Activated CD8-positive, alpha-beta T cell treated with anti-CD3 and anti-CD28 coated beads, Interleukin-2, amount 10 ng/mL, durations not matched to agents 7 days and 5 days (primary cell): ENCODE measurements at regions of chr11 and their contacts with region 1.

Region 1: GRCh38 chr11:3971756-3972404 is 116.4 kb downstream of the STIM1 start:
- DNase-seq: no peak
- ATAC-seq: no peak
- H3K4me3 Mint-ChIP-seq: no peak overlapping the region
- H3K27ac Mint-ChIP-seq: no peak overlapping the region
- H3K4me1 Mint-ChIP-seq: peaks cover 53% of the 10 kb centered on the region
- H3K27me3 Mint-ChIP-seq: no peaks in the 10 kb centered on the region

Region 2: DNA sequence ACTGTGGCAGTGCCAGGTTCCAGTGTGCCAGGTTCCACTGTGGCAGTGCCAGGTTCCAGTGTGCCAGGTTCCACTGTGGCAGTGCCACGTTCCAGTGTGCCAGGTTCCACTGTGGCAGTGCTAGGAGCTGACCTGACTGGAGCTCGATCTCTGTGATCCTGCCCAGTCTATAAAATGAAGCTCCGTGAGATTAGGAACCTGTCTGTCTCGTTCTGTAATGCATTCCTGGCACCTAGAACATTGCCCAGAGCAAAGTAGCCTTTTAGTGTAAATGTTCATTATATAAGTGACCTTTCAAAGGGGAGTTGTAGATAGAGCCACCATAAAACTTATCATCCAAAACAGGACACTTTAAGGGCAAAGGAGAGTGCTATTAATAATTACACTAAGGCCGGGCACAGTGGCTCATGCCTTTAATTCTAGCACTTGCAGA is 366.1 kb before region 1 on chr11:
- CTCF ChIA-PET with region 1: no interaction called
- POLR2A ChIA-PET with region 1: no interaction called
- DNase-seq: no peak
- ATAC-seq: no peak
- H3K4me3 Mint-ChIP-seq: no peak overlapping the region
- H3K27ac Mint-ChIP-seq: no peak overlapping the region
- H3K4me1 Mint-ChIP-seq: no peaks in the 10 kb centered on the region
- H3K27me3 Mint-ChIP-seq: peaks cover 2% of the 10 kb centered on the region

Region 3: GRCh38 chr11:3984896-3985295 is 13.0 kb after region 1 on chr11:
- CTCF ChIA-PET with region 1: interaction called, 31 read pairs
- POLR2A ChIA-PET with region 1: no interaction called
- DNase-seq: peak; percentile 64
- ATAC-seq: peak; percentile 70
- H3K4me3 Mint-ChIP-seq: no peak overlapping the region
- H3K27ac Mint-ChIP-seq: peak overlapping the region; percentile 9
- H3K4me1 Mint-ChIP-seq: peaks cover 82% of the 10 kb centered on the region
- H3K27me3 Mint-ChIP-seq: no peaks in the 10 kb centered on the region

Region 4: DNA sequence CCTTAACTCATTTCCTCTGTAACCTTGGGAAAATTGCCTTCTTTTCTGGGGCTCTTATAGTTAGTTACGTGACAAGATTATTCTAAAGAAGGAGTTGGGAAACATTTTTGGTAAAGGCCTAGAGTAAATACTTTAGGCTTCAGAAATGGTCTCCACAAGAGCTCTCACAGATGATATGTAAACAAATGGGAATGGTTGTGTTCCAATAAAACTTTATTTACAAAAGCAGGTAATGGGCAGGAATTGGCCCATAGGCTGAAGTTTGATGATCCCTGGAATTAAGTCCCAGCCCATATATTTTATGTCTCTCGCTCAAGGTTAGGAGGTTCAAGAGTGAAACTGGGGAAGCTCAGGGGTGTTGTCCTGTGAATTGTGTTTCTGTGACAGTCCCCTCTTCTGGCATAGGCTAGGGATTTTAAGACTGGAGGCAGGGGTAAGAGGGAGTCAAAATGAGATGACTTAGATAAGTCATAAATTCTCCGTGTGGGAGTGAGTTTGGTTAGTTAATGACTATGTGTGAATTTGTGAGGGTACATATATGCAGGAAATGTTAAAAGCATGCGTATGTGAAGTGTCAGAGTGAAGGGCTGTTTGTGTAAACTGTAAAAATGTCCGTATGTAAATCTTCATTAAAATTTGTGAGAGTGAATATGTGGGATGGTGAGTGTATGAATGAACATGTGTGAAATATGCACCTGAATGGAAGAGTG is 403.7 kb after region 1 on chr11:
- CTCF ChIA-PET with region 1: no interaction called
- POLR2A ChIA-PET with region 1: no interaction called
- DNase-seq: no peak
- ATAC-seq: no peak
- H3K4me3 Mint-ChIP-seq: no peak overlapping the region
- H3K27ac Mint-ChIP-seq: no peak overlapping the region
- H3K4me1 Mint-ChIP-seq: no peaks in the 10 kb centered on the region
- H3K27me3 Mint-ChIP-seq: peaks cover 6% of the 10 kb centered on the region